RWPE1 (cell line): ENCODE measurements at regions of chr1 and their contacts with region 1.

Region 1: DNA sequence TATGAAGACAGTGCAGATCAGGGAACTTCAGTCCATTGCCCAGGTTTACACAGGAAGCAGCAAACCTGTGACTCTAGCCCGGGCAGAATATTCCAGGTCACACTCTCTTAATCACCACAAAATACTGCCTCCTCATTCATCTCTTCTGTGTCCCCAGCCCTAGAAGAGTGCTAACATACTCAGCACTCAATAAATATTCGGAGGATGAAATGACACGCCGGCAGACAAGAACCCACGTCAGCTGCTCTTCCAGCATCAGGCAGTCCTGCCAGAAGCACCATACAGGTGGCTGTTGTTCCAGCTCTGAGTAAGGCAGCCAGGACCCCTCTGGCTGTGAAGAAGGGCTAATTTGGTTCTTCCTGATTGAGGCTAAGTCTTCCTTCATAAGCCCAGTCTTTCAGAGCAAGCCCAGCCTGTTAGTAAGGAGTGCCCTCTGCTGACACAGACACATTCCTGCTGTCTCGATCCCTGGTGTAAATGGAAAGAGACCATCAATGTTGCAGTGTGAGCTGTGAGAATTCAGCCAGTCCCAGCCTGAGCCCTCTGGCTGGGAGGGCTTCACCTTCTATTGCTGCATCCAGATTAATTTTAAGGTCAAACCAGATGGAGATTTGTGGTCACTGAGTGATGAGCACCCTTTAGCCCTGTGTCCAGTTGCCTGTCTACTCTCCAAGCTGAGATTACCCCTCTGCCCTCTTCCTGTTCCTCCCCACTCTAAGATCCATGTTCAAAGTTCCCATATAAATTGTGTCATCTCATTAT is 45.0 kb upstream of the KIRREL1 start:
- DNase-seq: peak; percentile 23
- H3K27ac ChIP-seq: no peak overlapping the region
- CTCF ChIP-seq: no peak; the same call in 1 of the 2 replicates

Region 2: DNA sequence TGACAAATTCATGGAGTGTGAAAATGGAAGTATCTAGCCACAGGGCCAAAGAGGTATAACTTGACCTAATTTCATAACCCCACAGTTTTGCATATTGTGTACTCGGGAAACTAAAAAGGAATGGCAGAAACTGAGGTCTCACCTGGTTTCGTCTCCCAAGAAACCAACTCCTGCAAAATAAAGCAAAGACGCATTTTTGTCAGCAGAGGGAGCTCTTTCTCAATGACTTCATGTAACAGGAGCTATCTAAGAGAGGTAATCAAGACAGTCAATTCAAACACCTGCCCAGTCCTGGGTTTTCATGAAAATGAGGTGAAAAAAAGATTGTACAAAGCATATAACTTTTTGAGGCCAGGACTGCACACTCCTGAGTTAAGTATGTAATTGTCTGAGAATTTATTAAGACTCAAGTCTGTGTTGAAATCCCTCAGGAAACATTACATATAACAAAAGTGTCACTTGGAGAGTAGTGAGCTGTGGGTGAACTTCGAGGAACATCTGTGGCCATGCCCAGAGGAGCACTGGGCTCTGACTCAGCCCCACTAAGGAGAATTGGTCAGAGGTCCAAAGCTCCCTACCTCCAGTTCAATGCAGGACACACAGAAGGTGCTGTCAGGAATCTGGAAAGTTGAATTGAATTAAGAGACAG is 368.2 kb before region 1 on chr1:
- CTCF ChIA-PET with region 1: interaction called, 12 read pairs
- POLR2A ChIA-PET with region 1: no interaction called
- DNase-seq: peak; percentile 61
- H3K27ac ChIP-seq: no peak overlapping the region
- CTCF ChIP-seq: peak; percentile 70

Region 3: GRCh38 chr1:157878059-157878458 is 70.4 kb before region 1 on chr1:
- CTCF ChIA-PET with region 1: interaction called, 10 read pairs
- POLR2A ChIA-PET with region 1: no interaction called
- DNase-seq: peak; percentile 33
- H3K27ac ChIP-seq: no peak overlapping the region
- CTCF ChIP-seq: peak; percentile 25